ENCODE measurements at regions of chr10 and their contacts with region 1.

Region 1: DNA sequence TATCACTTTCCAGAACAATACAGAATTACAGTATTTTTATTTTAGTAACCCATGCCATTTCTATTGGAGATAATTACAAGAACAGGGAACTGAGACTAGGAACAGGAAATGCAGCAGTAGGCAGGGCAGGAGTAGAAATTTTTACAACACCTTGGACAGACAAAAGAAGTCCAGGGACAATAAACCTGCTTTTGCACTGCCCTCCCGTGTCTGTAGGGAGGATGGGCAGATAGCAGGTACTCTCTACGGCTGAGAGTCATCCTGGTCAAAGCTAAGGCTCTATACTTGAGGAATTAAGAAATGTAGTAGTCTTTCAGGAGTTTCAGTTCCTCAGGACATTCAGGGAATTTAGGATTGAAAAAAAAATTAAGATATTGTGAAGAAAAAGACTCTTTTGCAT is 63.4 kb downstream of the VAX1 start:
- DNase-seq: no peak
- H3K4me3 Mint-ChIP-seq: no peak overlapping the region
- H3K27ac Mint-ChIP-seq: no peak overlapping the region
- H3K4me1 Mint-ChIP-seq: peaks cover 22% of the 10 kb centered on the region
- H3K27me3 Mint-ChIP-seq: no peaks in the 10 kb centered on the region
- CTCF ChIP-seq: no peak

Region 2: DNA sequence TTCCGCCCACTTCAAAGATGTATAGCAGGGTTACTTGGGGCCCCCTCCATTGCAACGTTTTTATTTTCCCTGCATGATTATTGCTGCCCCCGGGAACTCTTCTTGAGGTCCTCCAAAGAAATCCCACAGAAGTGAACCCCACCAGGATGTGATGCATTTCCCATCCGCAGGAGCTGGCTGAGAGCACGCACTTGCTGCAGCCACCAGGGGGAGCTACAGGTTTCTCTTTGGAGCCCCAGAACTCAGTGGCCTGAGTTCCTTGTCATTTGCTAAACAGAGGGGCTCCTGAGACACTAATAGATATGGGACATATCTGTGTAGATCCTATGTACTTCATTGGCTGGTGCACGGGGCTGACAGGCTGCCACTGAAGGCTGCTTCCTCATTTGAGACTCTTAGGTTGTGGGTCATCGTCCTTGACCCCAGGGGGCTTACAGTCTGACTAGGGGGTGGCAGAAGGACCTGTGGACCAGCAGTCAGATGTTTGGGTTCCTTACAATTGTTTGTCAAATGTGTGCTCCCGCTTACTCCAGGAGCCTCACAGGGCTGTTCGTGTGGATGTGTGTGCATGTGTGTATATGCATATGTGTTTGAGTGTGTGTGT is 277.6 kb before region 1 on chr10:
- CTCF ChIA-PET with region 1: interaction called, 3 read pairs
- intact Hi-C with region 1: loop called (anchors 5 kb)
- DNase-seq: peak; percentile 79
- H3K4me3 Mint-ChIP-seq: no peak overlapping the region
- H3K27ac Mint-ChIP-seq: no peak overlapping the region
- H3K4me1 Mint-ChIP-seq: no peaks in the 10 kb centered on the region
- H3K27me3 Mint-ChIP-seq: peaks cover 43% of the 10 kb centered on the region
- CTCF ChIP-seq: peak; percentile 76

Region 3: DNA sequence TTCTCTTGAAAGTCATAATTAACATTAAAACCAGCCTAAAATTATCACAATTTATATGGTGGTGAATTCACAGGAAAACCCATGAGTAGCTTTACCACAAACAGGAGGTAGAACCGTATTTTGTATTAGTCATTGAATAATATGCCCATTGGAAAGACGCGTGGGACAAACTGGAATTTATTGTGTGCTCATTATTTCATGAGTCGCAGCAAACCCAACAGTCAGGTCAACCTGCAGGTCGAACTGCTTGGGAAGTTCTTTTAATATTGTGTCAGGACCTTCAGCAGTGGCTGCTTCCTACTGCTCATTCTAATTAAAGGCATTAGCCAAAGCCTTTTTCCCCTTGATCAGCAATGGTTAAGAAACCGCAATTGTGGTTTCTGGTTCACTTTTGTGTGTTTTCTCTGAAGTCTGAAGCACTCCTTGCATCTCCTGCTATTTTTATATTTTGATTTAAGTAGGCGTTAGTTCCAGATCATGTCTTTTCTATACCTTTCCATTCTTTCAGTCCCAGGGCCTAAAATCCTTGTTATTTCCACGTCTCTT is 872.0 kb after region 1 on chr10:
- CTCF ChIA-PET with region 1: no interaction called
- intact Hi-C with region 1: no loop called
- DNase-seq: no peak
- H3K4me3 Mint-ChIP-seq: no peak overlapping the region
- H3K27ac Mint-ChIP-seq: no peak overlapping the region
- H3K4me1 Mint-ChIP-seq: no peaks in the 10 kb centered on the region
- H3K27me3 Mint-ChIP-seq: no peaks in the 10 kb centered on the region
- CTCF ChIP-seq: no peak